ENCODE measurements at regions of chr17 and their contacts with region 1.

Region 1: GRCh38 chr17:51260125-51260880 is at the start of gene UTP18:
- DNase-seq: peak; percentile 97
- ATAC-seq: peak; percentile 95 to 99 (median 98)
- H3K4me3 ChIP-seq: peak within 1 kb of the TSS; percentile 62 to 98 (median 92)
- H3K27ac ChIP-seq: peak within 1 kb of the TSS; percentile 88 to 98 (median 95)
- H3K4me1 ChIP-seq: peaks cover 2 to 75% (median 55%) of the 10 kb centered on the region in 9 donors
- H3K27me3 ChIP-seq: no peaks in the 10 kb centered on the region
- CTCF ChIP-seq: no peak
- total RNA-seq, gene UTP18: 4.8 to 13.4 (median 8.0) TPM

Region 2: GRCh38 chr17:51166197-51166986 is 93.9 kb before region 1 on chr17 and contains the start of gene NME2:
- intact Hi-C with region 1: loop called in 1 of 10 experiments (anchors 5 kb)
- DNase-seq: peak; percentile 90 to 93
- ATAC-seq: peak; percentile 95 to 97 (median 96)
- H3K4me3 ChIP-seq: peak within 1 kb of the TSS; percentile 65 to 97 (median 90)
- H3K27ac ChIP-seq: peak within 1 kb of the TSS; percentile 76 to 98 (median 93)
- H3K4me1 ChIP-seq: peaks cover 0 to 20% (median 14%) of the 10 kb centered on the region in 9 donors
- H3K27me3 ChIP-seq: no peaks in the 10 kb centered on the region
- CTCF ChIP-seq: peak in 1 of 9 donors; percentile 14
- total RNA-seq, gene NME2: 117 to 302 (median 208) TPM

Region 3: DNA sequence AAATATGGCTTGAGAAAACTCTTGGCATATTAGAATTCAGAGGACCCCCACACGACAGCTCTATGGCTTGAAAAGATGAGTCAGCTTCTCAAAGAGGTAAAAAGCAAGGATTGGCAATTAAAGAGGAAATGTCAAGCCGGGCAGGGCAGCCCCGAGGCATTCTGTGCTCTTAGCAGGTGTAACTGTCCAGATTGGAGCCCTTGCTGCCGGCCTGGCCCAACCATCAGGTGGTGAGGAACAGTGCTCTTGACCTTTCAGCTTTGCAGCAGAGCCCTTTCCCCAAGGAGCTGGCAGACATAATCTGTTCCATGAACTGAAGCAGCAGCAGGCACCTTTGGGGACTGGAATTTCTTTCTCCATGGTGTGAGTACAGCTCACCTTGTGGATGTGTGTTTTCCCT is 287.8 kb after region 1 on chr17:
- intact Hi-C with region 1: no loop called
- DNase-seq: no peak
- ATAC-seq: no peak
- H3K4me3 ChIP-seq: no peak overlapping the region
- H3K27ac ChIP-seq: no peak overlapping the region
- H3K4me1 ChIP-seq: no peaks in the 10 kb centered on the region
- H3K27me3 ChIP-seq: peaks cover 0 to 8% (median 0%) of the 10 kb centered on the region in 7 donors
- CTCF ChIP-seq: no peak

Measured in heart right ventricle (tissue), 16 donors.